Pancreas (tissue), 10 donors: ENCODE measurements at regions of chr18 and their contacts with region 1.

Region 1: DNA sequence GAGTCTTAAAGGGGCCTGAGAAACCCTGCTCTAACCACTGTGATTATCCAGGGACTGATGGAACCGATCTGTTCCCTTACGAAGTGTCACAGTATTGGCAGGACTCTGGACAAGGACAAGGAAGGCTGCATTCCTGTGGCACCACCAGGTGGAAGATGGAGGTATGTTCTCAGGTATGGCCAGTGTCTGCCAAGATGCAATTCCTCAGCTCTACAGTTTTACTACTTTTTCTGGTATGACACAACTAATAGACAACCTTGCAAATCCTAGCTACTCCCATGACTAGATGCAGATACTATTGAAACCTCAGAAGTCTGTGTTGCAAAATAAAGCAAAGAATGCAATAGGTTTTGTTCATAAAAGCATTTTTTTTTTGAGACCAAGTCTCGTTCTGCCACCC is 14.6 kb downstream of the RAB31 start:
- DNase-seq: peak in 4 of 6 donors; percentile 55 to 80 (median 62)
- ATAC-seq: peak; percentile 97 to 100 (median 98)
- H3K4me3 ChIP-seq: no peak overlapping the region
- H3K27ac ChIP-seq: no peak overlapping the region
- H3K4me1 ChIP-seq: no peaks in the 10 kb centered on the region
- H3K27me3 ChIP-seq: no peaks in the 10 kb centered on the region
- CTCF ChIP-seq: peak; percentile 30 to 59 (median 42)

Region 2: GRCh38 chr18:9575558-9575957 is 147.1 kb before region 1 on chr18:
- intact Hi-C with region 1: loop called in 2 of 3 experiments (anchors 10 kb)
- DNase-seq: peak; percentile 72 to 88 (median 79)
- ATAC-seq: peak; percentile 98 to 100 (median 99)
- H3K4me3 ChIP-seq: no peak overlapping the region
- H3K27ac ChIP-seq: peak overlapping the region in 1 of 4 donors; percentile 36
- H3K4me1 ChIP-seq: peaks cover 0 to 4% (median 0%) of the 10 kb centered on the region in 3 donors
- H3K27me3 ChIP-seq: no peaks in the 10 kb centered on the region
- CTCF ChIP-seq: peak; percentile 65 to 82 (median 69)